Activated B cell treated with CpG ODN at 0.5 μM for 24 hours (primary cell): ENCODE measurements at regions of chr9 and their contacts with region 1.

Region 1: GRCh38 chr9:36487482-36488388 is 85.0 kb upstream of the MELK start:
- DNase-seq: peak; percentile 87
- ATAC-seq: peak; percentile 91
- H3K4me3 Mint-ChIP-seq: peak overlapping the region; percentile 97
- H3K27ac Mint-ChIP-seq: peak overlapping the region; percentile 100
- H3K4me1 Mint-ChIP-seq: peaks cover 44% of the 10 kb centered on the region
- H3K27me3 Mint-ChIP-seq: no peaks in the 10 kb centered on the region
- CTCF ChIP-seq: no peak

Region 2: GRCh38 chr9:35161713-35162604 is 1325.8 kb before region 1 on chr9 and contains the start of gene UNC13B:
- CTCF ChIA-PET with region 1: no interaction called
- POLR2A ChIA-PET with region 1: no interaction called
- intact Hi-C with region 1: loop called (anchors 5 kb)
- DNase-seq: peak; percentile 72
- ATAC-seq: peak; percentile 95
- H3K4me3 Mint-ChIP-seq: peak within 1 kb of the TSS; percentile 89
- H3K27ac Mint-ChIP-seq: no peak within 1 kb of the TSS
- H3K4me1 Mint-ChIP-seq: peaks cover 24% of the 10 kb centered on the region
- H3K27me3 Mint-ChIP-seq: peaks cover 8% of the 10 kb centered on the region
- CTCF ChIP-seq: no peak
- total RNA-seq, gene UNC13B: 0.53 and 0.78 TPM in 2 replicates

Region 3: DNA sequence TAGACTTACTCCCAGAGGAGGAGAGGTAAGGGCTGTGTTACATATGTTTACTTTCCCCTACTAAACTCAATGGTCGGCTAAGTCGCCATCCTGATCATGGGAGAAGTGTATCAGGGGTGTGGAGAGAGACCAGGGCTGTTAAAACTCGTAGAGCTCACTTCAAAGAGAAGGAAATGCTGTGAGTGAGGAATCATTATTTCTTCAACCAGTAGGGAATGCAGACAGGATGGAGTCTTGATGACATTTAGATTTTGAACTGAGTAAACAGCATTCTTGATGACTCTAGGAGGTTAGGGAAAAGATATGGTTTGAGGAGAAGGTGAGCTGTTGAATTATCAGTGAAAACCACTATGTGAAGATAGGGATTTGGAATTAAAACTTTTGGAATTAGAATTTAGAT is 433.8 kb before region 1 on chr9:
- CTCF ChIA-PET with region 1: no interaction called
- POLR2A ChIA-PET with region 1: no interaction called
- intact Hi-C with region 1: no loop called
- DNase-seq: no peak
- ATAC-seq: no peak
- H3K4me3 Mint-ChIP-seq: no peak overlapping the region
- H3K27ac Mint-ChIP-seq: no peak overlapping the region
- H3K4me1 Mint-ChIP-seq: no peaks in the 10 kb centered on the region
- H3K27me3 Mint-ChIP-seq: no peaks in the 10 kb centered on the region
- CTCF ChIP-seq: no peak

Region 4: GRCh38 chr9:36190388-36191287 is 297.1 kb before region 1 on chr9 and contains the start of gene CLTA:
- CTCF ChIA-PET with region 1: no interaction called
- POLR2A ChIA-PET with region 1: interaction called, 4 read pairs
- intact Hi-C with region 1: loop called (anchors 2 kb)
- DNase-seq: peak; percentile 84
- ATAC-seq: peak; percentile 98
- H3K4me3 Mint-ChIP-seq: peak within 1 kb of the TSS; percentile 95
- H3K27ac Mint-ChIP-seq: peak within 1 kb of the TSS; percentile 91
- H3K4me1 Mint-ChIP-seq: peaks cover 51% of the 10 kb centered on the region
- H3K27me3 Mint-ChIP-seq: no peaks in the 10 kb centered on the region
- CTCF ChIP-seq: no peak
- total RNA-seq, gene CLTA: 104 and 115 TPM in 2 replicates

Region 5: GRCh38 chr9:36400332-36401163 is 87.2 kb before region 1 on chr9:
- CTCF ChIA-PET with region 1: no interaction called
- POLR2A ChIA-PET with region 1: interaction called, 12 read pairs
- intact Hi-C with region 1: loop called (anchors 1 kb)
- DNase-seq: peak; percentile 92
- ATAC-seq: peak; percentile 78
- H3K4me3 Mint-ChIP-seq: peak overlapping the region; percentile 89
- H3K27ac Mint-ChIP-seq: peak overlapping the region; percentile 93
- H3K4me1 Mint-ChIP-seq: peaks cover 38% of the 10 kb centered on the region
- H3K27me3 Mint-ChIP-seq: no peaks in the 10 kb centered on the region
- CTCF ChIP-seq: no peak

Region 6: GRCh38 chr9:36415822-36416515 is 71.8 kb before region 1 on chr9:
- CTCF ChIA-PET with region 1: no interaction called
- POLR2A ChIA-PET with region 1: no interaction called
- intact Hi-C with region 1: no loop called
- DNase-seq: no peak
- ATAC-seq: no peak
- H3K4me3 Mint-ChIP-seq: no peak overlapping the region
- H3K27ac Mint-ChIP-seq: no peak overlapping the region
- H3K4me1 Mint-ChIP-seq: peaks cover 4% of the 10 kb centered on the region
- H3K27me3 Mint-ChIP-seq: no peaks in the 10 kb centered on the region
- CTCF ChIP-seq: no peak

Region 7: GRCh38 chr9:36450110-36450732 is 37.5 kb before region 1 on chr9:
- CTCF ChIA-PET with region 1: no interaction called
- POLR2A ChIA-PET with region 1: no interaction called
- intact Hi-C with region 1: loop called (anchors 5 kb)
- DNase-seq: no peak
- ATAC-seq: no peak
- H3K4me3 Mint-ChIP-seq: no peak overlapping the region
- H3K27ac Mint-ChIP-seq: no peak overlapping the region
- H3K4me1 Mint-ChIP-seq: peaks cover 4% of the 10 kb centered on the region
- H3K27me3 Mint-ChIP-seq: no peaks in the 10 kb centered on the region
- CTCF ChIP-seq: no peak

Region 8: DNA sequence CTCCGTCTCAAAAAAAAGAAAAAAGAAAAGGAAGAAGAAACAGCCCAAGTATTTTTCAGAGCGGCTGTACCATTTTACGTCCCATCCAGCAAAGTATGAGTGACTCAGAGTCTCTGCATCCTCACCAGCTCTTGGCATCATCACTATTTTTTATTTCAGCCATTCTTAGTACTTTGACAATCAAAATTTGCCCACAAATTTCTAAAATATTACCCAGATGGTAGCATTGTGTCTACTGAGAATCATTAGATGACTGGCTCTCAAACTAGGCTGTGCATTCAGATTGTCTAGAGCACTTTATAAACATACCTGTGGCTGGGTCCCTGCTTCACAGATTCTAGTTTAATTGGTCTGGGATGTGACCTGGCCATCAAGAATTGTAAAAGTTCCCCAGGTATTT is 63.4 kb after region 1 on chr9:
- CTCF ChIA-PET with region 1: interaction called, 5 read pairs
- POLR2A ChIA-PET with region 1: no interaction called
- intact Hi-C with region 1: loop called (anchors 2 kb)
- DNase-seq: no peak
- ATAC-seq: no peak
- H3K4me3 Mint-ChIP-seq: no peak overlapping the region
- H3K27ac Mint-ChIP-seq: no peak overlapping the region
- H3K4me1 Mint-ChIP-seq: no peaks in the 10 kb centered on the region
- H3K27me3 Mint-ChIP-seq: peaks cover 6% of the 10 kb centered on the region
- CTCF ChIP-seq: no peak

Region 9: DNA sequence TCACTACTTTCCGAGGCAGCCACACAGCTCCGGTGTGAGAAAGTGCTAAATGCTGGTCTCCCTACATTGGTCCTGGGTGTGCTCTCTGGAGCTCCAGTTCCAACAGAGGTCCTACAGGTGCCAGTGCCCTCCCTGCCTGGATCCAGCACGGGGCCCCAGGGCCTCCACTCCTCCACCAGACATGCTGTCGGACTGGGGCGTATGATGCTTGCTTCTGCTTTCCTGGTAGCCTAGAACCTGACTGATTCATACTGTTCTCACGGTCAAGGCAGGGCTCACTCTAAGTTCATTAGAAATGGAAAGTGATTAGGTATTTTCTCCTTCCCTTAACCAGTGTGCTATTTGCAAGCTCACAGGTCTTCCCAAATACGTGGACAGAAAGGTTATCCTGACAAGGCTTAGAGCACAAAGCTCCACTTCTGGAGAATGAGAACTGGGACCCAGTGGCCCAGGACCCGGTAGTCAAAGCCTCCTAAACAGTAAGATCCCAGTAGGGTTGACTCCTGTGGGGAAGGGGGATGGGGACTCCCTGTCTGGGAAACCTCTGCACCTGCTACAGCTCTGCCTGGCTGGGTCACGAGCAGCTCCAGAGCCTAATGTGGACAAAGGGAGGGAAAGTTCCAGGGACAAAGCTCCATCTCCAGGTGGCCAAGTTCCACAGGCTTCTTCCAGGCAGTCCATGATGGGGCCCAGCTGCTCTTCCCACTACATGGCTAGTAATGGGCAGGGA is 448.2 kb after region 1 on chr9:
- CTCF ChIA-PET with region 1: no interaction called
- POLR2A ChIA-PET with region 1: no interaction called
- intact Hi-C with region 1: no loop called
- DNase-seq: no peak
- ATAC-seq: peak; percentile 64
- H3K4me3 Mint-ChIP-seq: peak overlapping the region; percentile 44
- H3K27ac Mint-ChIP-seq: peak overlapping the region; percentile 85
- H3K4me1 Mint-ChIP-seq: peaks cover 92% of the 10 kb centered on the region
- H3K27me3 Mint-ChIP-seq: no peaks in the 10 kb centered on the region
- CTCF ChIP-seq: no peak

Region 10: DNA sequence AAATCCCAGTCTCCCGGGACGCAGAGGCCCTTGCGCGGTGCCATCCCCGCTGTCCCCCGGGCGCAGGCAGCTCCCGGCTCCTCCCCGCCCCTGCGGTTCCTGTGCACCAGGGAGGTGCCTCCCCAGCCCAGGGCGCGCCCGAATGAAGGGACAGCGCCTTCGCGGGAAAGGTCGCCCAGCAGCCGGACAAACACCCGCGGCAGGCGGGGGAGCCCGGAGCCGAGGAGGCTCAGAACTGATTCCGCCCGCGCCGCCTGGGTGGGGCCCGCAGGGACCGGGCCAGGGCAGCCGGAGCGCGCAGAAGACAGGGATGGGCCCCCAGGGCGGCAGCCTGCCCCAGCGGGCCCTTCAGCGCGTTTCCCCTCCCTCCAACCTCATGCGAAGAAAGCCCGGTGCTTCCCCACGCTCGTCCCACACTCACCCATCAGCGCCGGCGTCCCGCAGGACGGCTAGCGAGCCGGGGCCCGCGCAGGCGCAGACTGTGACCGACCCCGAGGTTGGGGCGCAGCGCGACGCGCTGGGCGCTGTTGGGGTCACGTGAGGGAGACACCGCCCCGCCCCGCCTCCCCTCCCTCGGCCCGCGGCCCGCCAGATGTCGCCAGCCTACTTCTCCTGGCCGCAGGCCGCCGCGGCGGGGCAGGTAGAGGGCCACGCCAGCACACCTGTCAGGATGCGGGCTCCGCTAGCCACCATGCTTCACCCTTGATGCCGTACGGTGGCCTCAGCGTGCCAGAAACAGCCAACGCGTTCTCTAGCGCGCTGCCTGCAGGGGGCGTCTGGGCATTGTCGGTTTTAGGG is 1416.1 kb after region 1 on chr9 and contains the start of gene SLC25A51:
- CTCF ChIA-PET with region 1: no interaction called
- POLR2A ChIA-PET with region 1: no interaction called
- intact Hi-C with region 1: loop called (anchors 10 kb)
- DNase-seq: peak; percentile 98
- ATAC-seq: peak; percentile 82
- H3K4me3 Mint-ChIP-seq: peak within 1 kb of the TSS; percentile 85
- H3K27ac Mint-ChIP-seq: peak within 1 kb of the TSS; percentile 92
- H3K4me1 Mint-ChIP-seq: peaks cover 24% of the 10 kb centered on the region
- H3K27me3 Mint-ChIP-seq: no peaks in the 10 kb centered on the region
- CTCF ChIP-seq: no peak
- total RNA-seq, gene SLC25A51: 30.5 and 33.9 TPM in 2 replicates